Activated naive CD4-positive, alpha-beta T cell treated with anti-CD3 and anti-CD28 coated beads for 36 hours (primary cell): ENCODE measurements at regions of chr20 and their contacts with region 1.

Region 1: DNA sequence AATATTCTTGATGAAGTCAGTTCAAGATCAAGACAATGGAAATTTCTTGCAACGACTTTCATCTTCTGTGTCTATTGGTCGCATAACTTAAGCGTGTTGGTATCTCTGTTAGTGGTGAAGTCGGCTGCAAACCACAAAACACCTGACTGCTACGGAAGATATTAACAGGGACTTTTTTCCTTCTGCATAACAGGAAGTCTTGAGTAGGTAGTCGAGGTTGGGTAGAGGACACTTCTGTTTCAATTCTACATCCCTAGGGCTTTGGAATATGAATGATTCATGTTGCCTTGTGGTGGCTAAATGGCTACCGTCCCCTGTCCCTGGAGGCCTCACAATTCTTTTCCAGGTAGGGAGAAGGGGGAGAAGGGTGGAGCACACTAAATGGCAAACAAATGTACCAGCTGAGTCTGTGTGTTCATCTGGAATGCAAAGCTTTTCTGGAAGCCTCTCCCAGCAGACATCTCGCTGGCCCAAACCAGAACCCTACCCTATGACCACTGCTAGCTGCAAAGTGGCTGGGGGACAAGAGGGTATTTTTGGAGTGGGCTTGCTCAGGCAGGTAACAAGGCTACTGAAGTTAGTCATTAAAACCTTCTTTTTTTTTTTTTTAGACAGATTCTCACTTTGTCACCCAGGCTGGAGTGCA is 34.6 kb upstream of the NKX2-2 start:
- DNase-seq: peak; percentile 80
- H3K4me3 Mint-ChIP-seq: peak overlapping the region; percentile 36
- H3K27ac Mint-ChIP-seq: peak overlapping the region; percentile 76
- H3K4me1 Mint-ChIP-seq: peaks cover 42% of the 10 kb centered on the region
- H3K27me3 Mint-ChIP-seq: no peaks in the 10 kb centered on the region

Region 2: GRCh38 chr20:20052074-20052970 is 1496.2 kb before region 1 on chr20 and contains the starts of genes CFAP61 and CRNKL1:
- CTCF ChIA-PET with region 1: no interaction called
- intact Hi-C with region 1: loop called (anchors 5 kb)
- DNase-seq: peak; percentile 97
- H3K4me3 Mint-ChIP-seq: peak within 1 kb of the TSS; percentile 97
- H3K27ac Mint-ChIP-seq: peak within 1 kb of the TSS; percentile 96
- H3K4me1 Mint-ChIP-seq: peaks cover 14% of the 10 kb centered on the region
- H3K27me3 Mint-ChIP-seq: peaks cover 5% of the 10 kb centered on the region
- total RNA-seq, gene CFAP61: not detected
- total RNA-seq, gene CRNKL1: 14.1 to 15.7 TPM

Region 3: GRCh38 chr20:20993372-20993771 is 555.1 kb before region 1 on chr20:
- CTCF ChIA-PET with region 1: no interaction called
- intact Hi-C with region 1: no loop called
- DNase-seq: no peak
- H3K4me3 Mint-ChIP-seq: no peak overlapping the region
- H3K27ac Mint-ChIP-seq: no peak overlapping the region
- H3K4me1 Mint-ChIP-seq: no peaks in the 10 kb centered on the region
- H3K27me3 Mint-ChIP-seq: peaks cover 13% of the 10 kb centered on the region

Region 4: GRCh38 chr20:21513881-21514540 is 34.5 kb before region 1 on chr20 and contains the start of gene NKX2-2:
- CTCF ChIA-PET with region 1: no interaction called
- intact Hi-C with region 1: loop called (anchors 2 kb)
- DNase-seq: no peak
- H3K4me3 Mint-ChIP-seq: peak within 1 kb of the TSS; percentile 42
- H3K27ac Mint-ChIP-seq: no peak within 1 kb of the TSS
- H3K4me1 Mint-ChIP-seq: peaks cover 64% of the 10 kb centered on the region
- H3K27me3 Mint-ChIP-seq: peaks cover 80% of the 10 kb centered on the region
- total RNA-seq, gene NKX2-2: not detected

Region 5: DNA sequence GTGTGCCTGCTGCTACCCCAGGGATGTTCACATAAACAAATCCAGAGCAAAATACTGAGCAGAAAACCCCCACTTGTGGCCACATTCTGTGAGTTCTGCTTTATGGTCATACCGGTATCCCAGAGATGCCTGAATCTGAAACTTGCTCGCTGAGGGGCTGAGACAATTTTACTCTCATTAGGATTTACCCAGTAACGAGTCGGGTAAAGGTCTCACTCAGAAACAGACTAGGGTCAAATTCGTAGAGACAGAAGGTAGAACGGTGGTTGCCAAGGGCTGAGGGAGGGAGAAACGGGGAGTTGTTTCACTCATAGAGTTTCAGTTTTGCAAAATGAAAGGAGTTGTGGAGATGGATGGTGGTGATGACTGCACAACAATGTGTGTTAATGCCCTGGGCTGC is 10.8 kb after region 1 on chr20:
- CTCF ChIA-PET with region 1: no interaction called
- intact Hi-C with region 1: loop called (anchors 1 kb)
- DNase-seq: peak; percentile 22
- H3K4me3 Mint-ChIP-seq: no peak overlapping the region
- H3K27ac Mint-ChIP-seq: no peak overlapping the region
- H3K4me1 Mint-ChIP-seq: peaks cover 36% of the 10 kb centered on the region
- H3K27me3 Mint-ChIP-seq: peaks cover 2% of the 10 kb centered on the region

Region 6: DNA sequence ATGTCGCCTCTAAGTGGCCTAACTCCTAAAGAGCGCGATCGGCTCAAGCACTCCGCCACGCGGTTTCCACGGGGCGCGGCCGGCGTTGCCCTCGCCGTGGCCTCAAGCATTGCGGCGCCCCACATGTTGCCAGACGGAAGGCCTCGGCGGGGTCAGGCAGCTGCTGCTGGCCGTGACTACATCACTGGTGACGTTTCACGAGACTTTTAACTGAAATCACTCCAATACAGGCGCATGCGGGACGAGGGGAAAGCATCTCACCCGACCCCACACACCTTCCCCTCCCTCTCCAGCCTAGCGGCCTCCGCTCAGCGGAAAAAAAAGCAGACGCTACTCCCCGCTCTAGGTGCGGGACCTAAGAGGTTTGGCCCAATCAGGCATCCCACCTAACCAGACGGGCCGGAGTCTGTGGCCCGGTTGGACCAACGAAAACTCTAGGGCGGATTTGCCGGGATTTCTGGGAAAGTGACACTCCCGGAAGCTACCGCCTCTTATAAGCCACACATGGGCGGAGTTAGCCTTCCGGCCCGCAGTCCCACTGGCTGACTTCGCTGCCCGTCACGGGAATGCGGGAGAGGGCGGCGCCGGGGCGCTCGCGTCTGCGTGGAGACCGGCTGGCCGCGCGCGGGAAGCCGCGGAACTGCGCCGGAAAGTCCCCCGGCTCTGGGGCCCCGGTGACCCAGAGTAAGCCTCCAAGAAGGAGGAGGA is 1801.8 kb after region 1 on chr20 and contains the start of gene NXT1:
- CTCF ChIA-PET with region 1: no interaction called
- intact Hi-C with region 1: loop called (anchors 10 kb)
- DNase-seq: peak; percentile 96
- H3K4me3 Mint-ChIP-seq: peak within 1 kb of the TSS; percentile 77
- H3K27ac Mint-ChIP-seq: peak within 1 kb of the TSS; percentile 100
- H3K4me1 Mint-ChIP-seq: peaks cover 36% of the 10 kb centered on the region
- H3K27me3 Mint-ChIP-seq: no peaks in the 10 kb centered on the region
- total RNA-seq, gene NXT1: 31.9 to 36.9 TPM